Activated naive CD4-positive, alpha-beta T cell treated with anti-CD3 and anti-CD28 coated beads for 36 hours (primary cell): ENCODE measurements at regions of chr18 and their contacts with region 1.

Region 1: GRCh38 chr18:49510393-49511115 is 23.5 kb upstream of the C18orf32 start:
- DNase-seq: peak; percentile 60
- H3K4me3 Mint-ChIP-seq: no peak overlapping the region
- H3K27ac Mint-ChIP-seq: no peak overlapping the region
- H3K4me1 Mint-ChIP-seq: no peaks in the 10 kb centered on the region
- H3K27me3 Mint-ChIP-seq: peaks cover 12% of the 10 kb centered on the region

Region 2: GRCh38 chr18:49728542-49728941 is 218.0 kb after region 1 on chr18:
- CTCF ChIA-PET with region 1: no interaction called
- intact Hi-C with region 1: loop called (anchors 1 kb)
- DNase-seq: peak; percentile 69
- H3K4me3 Mint-ChIP-seq: no peak overlapping the region
- H3K27ac Mint-ChIP-seq: no peak overlapping the region
- H3K4me1 Mint-ChIP-seq: peaks cover 4% of the 10 kb centered on the region
- H3K27me3 Mint-ChIP-seq: no peaks in the 10 kb centered on the region

Region 3: DNA sequence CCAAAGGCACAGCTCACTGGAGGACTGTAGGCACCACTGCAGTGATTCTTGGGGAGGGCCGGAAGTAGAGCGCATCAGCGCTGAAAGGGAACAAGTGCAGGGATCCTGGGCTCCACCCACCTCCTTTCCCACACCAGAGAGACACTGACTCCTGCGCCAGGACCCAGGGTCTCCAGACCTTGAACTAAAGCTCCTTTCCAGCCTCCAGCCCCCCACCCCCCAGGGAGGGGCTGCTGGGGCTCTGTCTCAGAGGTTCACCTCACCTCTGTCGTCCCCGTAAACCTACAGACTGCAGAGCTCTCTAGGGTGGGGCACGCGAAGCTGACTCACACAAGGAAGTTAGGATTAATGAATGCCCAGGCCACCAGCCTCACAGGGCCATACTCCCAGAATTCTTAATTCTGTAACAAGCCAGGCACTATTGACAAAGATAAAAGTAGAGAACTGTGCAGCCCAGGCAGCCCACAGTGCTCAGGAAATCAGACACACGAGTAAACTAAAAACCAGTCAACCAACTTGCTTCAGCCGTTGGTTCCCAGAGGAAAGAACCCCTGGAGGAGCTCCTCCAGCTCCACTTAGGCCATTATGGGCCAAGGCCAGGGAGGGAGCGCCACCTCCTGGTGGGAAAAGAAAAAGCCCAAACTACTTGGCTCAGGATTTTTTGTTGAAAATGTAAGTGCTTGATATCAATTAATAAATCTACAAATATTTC is 347.9 kb after region 1 on chr18:
- CTCF ChIA-PET with region 1: interaction called, 83 read pairs
- intact Hi-C with region 1: loop called (anchors 1 kb)
- DNase-seq: peak; percentile 73
- H3K4me3 Mint-ChIP-seq: no peak overlapping the region
- H3K27ac Mint-ChIP-seq: no peak overlapping the region
- H3K4me1 Mint-ChIP-seq: no peaks in the 10 kb centered on the region
- H3K27me3 Mint-ChIP-seq: no peaks in the 10 kb centered on the region

Region 4: DNA sequence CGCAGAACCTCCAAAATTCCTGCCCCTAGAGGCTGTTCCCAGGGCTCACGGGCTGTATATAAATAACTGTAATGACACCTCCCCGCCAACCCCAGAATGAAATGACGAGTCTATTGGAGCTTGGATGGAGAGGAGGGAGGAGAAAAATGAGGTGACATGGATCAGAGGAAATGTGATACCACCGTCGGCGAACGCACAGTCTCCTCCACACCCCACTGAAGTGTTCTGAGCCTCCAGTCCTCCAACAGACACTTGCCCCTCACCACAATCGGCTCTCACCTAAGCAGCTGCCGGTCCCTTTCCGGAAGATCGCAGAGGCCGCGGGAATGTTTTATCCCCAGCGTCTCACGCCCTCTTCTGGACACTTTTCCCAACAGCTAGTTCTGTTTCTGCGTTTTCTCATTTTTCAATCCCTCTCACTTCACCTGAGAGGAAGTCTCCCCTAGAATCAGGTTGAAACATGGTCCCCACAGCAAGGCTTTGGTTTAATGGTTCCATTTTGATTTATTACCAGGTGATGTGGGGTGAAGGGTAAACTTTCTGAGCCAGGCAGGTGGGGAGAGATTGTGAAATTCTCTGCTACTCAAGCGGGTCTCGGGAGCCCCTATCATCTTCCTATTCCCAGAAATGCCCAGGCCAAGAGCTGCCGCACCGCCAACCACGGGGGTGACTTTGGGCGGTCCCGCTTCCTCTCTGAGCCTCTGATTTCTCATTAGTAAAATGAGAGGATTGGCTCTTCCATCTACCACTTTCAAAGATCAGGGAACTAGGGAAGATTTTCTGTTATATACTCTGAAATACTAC is 693.4 kb after region 1 on chr18:
- CTCF ChIA-PET with region 1: interaction called, 4 read pairs
- intact Hi-C with region 1: loop called (anchors 5 kb)
- DNase-seq: peak; percentile 47
- H3K4me3 Mint-ChIP-seq: peak overlapping the region; percentile 39
- H3K27ac Mint-ChIP-seq: no peak overlapping the region
- H3K4me1 Mint-ChIP-seq: peaks cover 10% of the 10 kb centered on the region
- H3K27me3 Mint-ChIP-seq: peaks cover 33% of the 10 kb centered on the region